ENCODE measurements at regions of chr19 and their contacts with region 1.

Region 1: DNA sequence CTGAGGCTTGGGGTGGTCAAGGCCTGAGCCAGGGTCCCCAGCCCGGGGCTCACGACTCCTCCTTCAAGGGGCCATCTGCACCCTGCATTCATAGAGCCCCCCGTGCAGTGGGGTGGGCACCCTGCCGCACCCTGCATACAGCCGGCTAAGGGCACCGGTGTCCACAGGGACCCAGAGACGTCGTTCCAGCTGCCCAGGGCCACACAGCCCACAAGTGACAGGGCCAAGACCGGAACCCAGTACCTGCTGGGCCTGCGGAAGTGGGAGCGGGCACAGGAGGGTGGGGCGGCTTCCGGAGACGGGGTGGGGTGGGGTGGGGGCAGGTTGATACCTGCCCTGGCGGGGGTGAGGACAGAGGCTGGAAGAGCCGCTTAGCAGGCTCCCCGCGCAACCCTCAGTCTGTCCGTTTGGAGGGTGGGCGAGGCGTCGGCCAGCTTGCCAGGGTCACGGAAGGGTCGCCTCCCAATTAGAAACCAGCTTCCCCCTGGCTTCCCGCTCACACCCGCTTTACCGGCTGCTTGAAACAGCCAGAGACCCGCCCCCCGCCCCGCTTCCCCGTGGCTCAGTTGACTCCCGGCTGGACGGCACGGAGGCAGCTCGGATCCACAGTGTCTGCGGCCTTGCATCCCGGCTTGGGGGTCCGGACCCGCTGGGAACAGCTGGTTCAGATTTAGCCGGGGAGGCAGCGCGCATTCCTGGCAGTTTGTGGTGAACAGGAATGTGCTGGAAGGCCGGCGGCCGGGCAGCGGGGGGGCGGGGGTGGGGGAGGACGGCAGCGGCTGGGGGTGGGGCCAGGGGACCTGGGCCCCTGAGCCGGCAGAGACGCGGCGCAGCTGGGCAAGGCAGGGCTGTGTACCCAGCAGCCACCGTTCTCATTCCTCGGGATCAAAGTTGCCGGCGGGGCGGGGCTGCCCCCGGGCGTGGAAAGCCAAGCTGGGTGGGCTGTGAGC is 1.8 kb downstream of the CNN2 start:
- DNase-seq: no peak
- ATAC-seq: peak; percentile 71
- H3K4me3 ChIP-seq: peak overlapping the region; percentile 82 to 94
- H3K27ac ChIP-seq: peak overlapping the region; percentile 94
- H3K4me1 ChIP-seq: peaks cover 8% of the 10 kb centered on the region
- H3K27me3 ChIP-seq: no peaks in the 10 kb centered on the region
- CTCF ChIP-seq: no peak

Region 2: DNA sequence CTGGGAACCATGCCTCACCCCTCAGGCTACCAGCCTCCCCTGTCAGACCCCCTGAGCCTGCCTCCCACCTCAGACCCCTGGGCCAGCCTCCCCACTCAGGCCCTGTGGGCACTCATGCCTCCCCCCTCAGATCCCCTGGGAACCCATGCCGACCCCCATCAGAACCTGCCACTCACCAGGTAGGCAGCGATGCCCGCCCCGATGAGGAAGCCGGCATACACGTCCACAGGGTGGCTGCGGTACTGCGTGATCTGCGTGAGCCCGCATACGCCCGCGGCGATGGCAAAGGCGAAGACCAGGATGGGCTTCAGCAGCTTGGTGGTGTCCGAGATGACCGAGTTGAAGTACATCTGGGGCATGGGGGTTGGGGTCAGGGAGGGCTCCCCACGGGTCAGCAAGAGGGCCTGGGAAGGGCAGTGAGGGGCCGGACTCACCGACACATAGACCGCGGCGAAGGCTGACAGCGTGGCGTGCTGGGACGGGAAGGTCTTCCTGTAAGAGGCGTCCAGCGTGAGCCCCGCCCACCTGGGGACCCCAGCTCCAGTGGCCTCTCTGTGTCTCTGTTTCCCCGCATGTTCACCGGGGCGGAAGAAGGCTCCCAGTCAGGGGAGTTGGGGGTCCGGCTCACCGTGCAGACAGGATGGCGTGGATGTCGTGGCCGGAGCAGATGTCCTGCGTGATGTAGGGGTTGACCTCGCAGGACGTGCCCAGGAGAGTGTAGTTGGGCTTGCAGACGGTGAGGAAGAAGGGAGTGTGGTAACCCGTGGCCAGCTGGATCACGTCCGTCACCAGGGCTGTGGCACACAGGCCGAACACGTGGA is 213.8 kb before region 1 on chr19:
- CTCF ChIA-PET with region 1: no interaction called
- POLR2A ChIA-PET with region 1: no interaction called
- in situ Hi-C with region 1: no loop called
- intact Hi-C with region 1: no loop called
- DNase-seq: no peak
- ATAC-seq: peak; percentile 7; the same call in 1 of the 2 replicates
- H3K4me3 ChIP-seq: no peak overlapping the region
- H3K27ac ChIP-seq: no peak overlapping the region
- H3K4me1 ChIP-seq: no peaks in the 10 kb centered on the region
- H3K27me3 ChIP-seq: no peaks in the 10 kb centered on the region
- CTCF ChIP-seq: no peak

Region 3: DNA sequence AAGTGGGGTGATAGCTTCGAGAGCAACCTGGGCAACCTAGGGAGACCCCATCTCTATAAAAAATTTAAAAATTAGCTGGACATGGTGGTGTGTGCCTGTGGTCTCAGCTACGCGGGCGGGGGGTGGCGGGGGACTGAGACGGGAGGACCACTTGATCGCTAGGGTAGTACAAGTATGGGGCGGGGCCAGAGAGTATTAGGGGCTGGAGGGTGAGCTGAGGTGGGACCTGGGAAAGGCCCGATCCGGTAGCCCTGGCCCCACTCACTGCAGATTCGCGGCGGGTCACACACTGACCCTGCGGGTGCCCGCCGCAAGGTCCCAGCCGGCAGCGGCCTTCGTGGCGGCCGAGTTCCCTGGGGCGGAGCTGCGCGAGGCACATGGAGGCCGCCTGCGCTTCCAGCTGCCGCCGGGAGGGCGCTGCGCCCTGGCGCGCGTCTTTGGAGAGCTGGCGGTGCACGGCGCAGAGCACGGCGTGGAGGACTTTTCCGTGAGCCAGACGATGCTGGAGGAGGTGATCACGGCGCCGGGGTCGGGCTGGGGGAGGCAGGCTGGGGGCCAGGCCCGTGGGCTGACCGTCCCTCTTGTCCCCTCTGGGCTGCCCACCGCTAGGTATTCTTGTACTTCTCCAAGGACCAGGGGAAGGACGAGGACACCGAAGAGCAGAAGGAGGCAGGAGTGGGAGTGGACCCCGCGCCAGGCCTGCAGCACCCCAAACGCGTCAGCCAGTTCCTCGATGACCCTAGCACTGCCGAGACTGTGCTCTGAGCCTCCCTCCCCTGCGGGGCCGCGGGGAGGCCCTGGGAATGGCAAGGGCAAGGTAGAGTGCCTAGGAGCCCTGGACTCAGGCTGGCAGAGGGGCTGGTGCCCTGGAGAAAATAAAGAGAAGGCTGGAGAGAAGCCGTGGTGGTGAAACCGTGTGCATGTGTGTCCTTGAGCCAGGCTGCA is 36.7 kb after region 1 on chr19:
- CTCF ChIA-PET with region 1: no interaction called
- POLR2A ChIA-PET with region 1: interaction called, 13 read pairs
- in situ Hi-C with region 1: no loop called
- intact Hi-C with region 1: no loop called
- DNase-seq: no peak
- ATAC-seq: peak; percentile 82
- H3K4me3 ChIP-seq: peak overlapping the region in 1 of 2 experiments; percentile 16; a peak in 1 of 4 replicates
- H3K27ac ChIP-seq: peak overlapping the region; percentile 66
- H3K4me1 ChIP-seq: peaks cover 17% of the 10 kb centered on the region
- H3K27me3 ChIP-seq: no peaks in the 10 kb centered on the region
- CTCF ChIP-seq: peak; percentile 88

Region 4: GRCh38 chr19:1123381-1123780 is 95.2 kb after region 1 on chr19:
- CTCF ChIA-PET with region 1: no interaction called
- POLR2A ChIA-PET with region 1: interaction called, 11 read pairs
- in situ Hi-C with region 1: no loop called
- intact Hi-C with region 1: no loop called
- DNase-seq: no peak
- ATAC-seq: peak; percentile 18
- H3K4me3 ChIP-seq: no peak overlapping the region
- H3K27ac ChIP-seq: no peak overlapping the region
- H3K4me1 ChIP-seq: no peaks in the 10 kb centered on the region
- H3K27me3 ChIP-seq: no peaks in the 10 kb centered on the region
- CTCF ChIP-seq: no peak

Region 5: GRCh38 chr19:1154731-1155351 is 126.6 kb after region 1 on chr19:
- CTCF ChIA-PET with region 1: no interaction called
- POLR2A ChIA-PET with region 1: no interaction called
- in situ Hi-C with region 1: no loop called
- intact Hi-C with region 1: no loop called
- DNase-seq: no peak
- ATAC-seq: peak; percentile 37
- H3K4me3 ChIP-seq: no peak overlapping the region
- H3K27ac ChIP-seq: peak overlapping the region; percentile 83
- H3K4me1 ChIP-seq: peaks cover 31% of the 10 kb centered on the region
- H3K27me3 ChIP-seq: no peaks in the 10 kb centered on the region
- CTCF ChIP-seq: no peak

Region 6: GRCh38 chr19:1221141-1221903 is 193.1 kb after region 1 on chr19:
- CTCF ChIA-PET with region 1: interaction called, 17 read pairs
- POLR2A ChIA-PET with region 1: no interaction called
- in situ Hi-C with region 1: no loop called
- intact Hi-C with region 1: no loop called
- DNase-seq: no peak
- ATAC-seq: peak; percentile 47
- H3K4me3 ChIP-seq: no peak overlapping the region
- H3K27ac ChIP-seq: no peak overlapping the region
- H3K4me1 ChIP-seq: peaks cover 7% of the 10 kb centered on the region
- H3K27me3 ChIP-seq: no peaks in the 10 kb centered on the region
- CTCF ChIP-seq: peak; percentile 76